CD8-positive, alpha-beta T cell (primary cell): ENCODE measurements at regions of chr6 and their contacts with region 1.

Region 1: GRCh38 chr6:37566111-37566949 is 66.6 kb upstream of the CCDC167 start:
- DNase-seq: peak; percentile 41 to 89 (median 72)
- ATAC-seq: peak; percentile 95
- H3K4me3 ChIP-seq: peak overlapping the region; percentile 2 to 43
- H3K4me3 Mint-ChIP-seq: peak overlapping the region; percentile 39
- H3K27ac ChIP-seq: no peak overlapping the region
- H3K27ac Mint-ChIP-seq: no peak overlapping the region
- H3K4me1 ChIP-seq: peaks cover 3% of the 10 kb centered on the region
- H3K4me1 Mint-ChIP-seq: peaks cover 13% of the 10 kb centered on the region
- H3K27me3 ChIP-seq: peaks cover 0 to 5% of the 10 kb centered on the region in 2 experiments
- H3K27me3 Mint-ChIP-seq: no peaks in the 10 kb centered on the region
- CTCF ChIP-seq: peak; percentile 94

Region 2: DNA sequence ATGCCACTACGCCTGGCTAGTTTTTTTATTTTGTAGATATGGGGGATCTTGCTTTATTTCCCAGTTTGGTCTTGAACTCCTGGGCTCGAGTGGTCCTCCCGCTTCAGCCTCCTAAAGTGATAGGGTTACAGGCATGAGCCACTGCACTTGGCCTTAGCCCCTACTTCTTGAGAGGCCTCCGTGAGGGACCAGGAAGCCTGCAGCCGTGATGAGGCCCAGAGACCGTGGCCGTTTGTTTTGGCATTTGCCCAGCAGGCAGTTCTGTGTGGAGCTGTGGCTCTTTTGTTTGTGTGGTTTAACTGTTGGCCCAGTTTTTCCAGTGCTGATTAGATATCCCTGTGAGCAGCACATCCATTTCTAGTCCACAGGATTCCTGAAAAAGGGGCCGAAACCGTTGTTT is 932.4 kb before region 1 on chr6:
- CTCF ChIA-PET with region 1: no interaction called
- POLR2A ChIA-PET with region 1: no interaction called
- intact Hi-C with region 1: loop called in 1 of 2 experiments (anchors 5 kb)
- DNase-seq: no peak
- ATAC-seq: no peak
- H3K4me3 ChIP-seq: no peak overlapping the region
- H3K4me3 Mint-ChIP-seq: no peak overlapping the region
- H3K27ac ChIP-seq: no peak overlapping the region
- H3K27ac Mint-ChIP-seq: no peak overlapping the region
- H3K4me1 ChIP-seq: no peaks in the 10 kb centered on the region
- H3K4me1 Mint-ChIP-seq: no peaks in the 10 kb centered on the region
- H3K27me3 ChIP-seq: no peaks in the 10 kb centered on the region
- H3K27me3 Mint-ChIP-seq: no peaks in the 10 kb centered on the region
- CTCF ChIP-seq: no peak

Region 3: GRCh38 chr6:37381579-37381978 is 184.8 kb before region 1 on chr6:
- CTCF ChIA-PET with region 1: interaction called, 7 read pairs
- POLR2A ChIA-PET with region 1: no interaction called
- intact Hi-C with region 1: loop called (anchors 1 to 5 kb)
- DNase-seq: peak in 4 of 9 experiments; percentile 10 to 71 (median 42)
- ATAC-seq: peak; percentile 34
- H3K4me3 ChIP-seq: no peak overlapping the region
- H3K4me3 Mint-ChIP-seq: no peak overlapping the region
- H3K27ac ChIP-seq: no peak overlapping the region
- H3K27ac Mint-ChIP-seq: no peak overlapping the region
- H3K4me1 ChIP-seq: no peaks in the 10 kb centered on the region
- H3K4me1 Mint-ChIP-seq: no peaks in the 10 kb centered on the region
- H3K27me3 ChIP-seq: no peaks in the 10 kb centered on the region
- H3K27me3 Mint-ChIP-seq: no peaks in the 10 kb centered on the region
- CTCF ChIP-seq: peak; percentile 40

Region 4: GRCh38 chr6:37489660-37490361 is 76.5 kb before region 1 on chr6:
- CTCF ChIA-PET with region 1: interaction called, 191 read pairs
- POLR2A ChIA-PET with region 1: no interaction called
- intact Hi-C with region 1: no loop called
- DNase-seq: peak in 7 of 9 experiments; percentile 41 to 75 (median 58)
- ATAC-seq: peak; percentile 78
- H3K4me3 ChIP-seq: no peak overlapping the region
- H3K4me3 Mint-ChIP-seq: peak overlapping the region; percentile 32
- H3K27ac ChIP-seq: peak overlapping the region in 1 of 2 experiments; percentile 72
- H3K27ac Mint-ChIP-seq: peak overlapping the region; percentile 91
- H3K4me1 ChIP-seq: peaks cover 37% of the 10 kb centered on the region
- H3K4me1 Mint-ChIP-seq: peaks cover 44% of the 10 kb centered on the region
- H3K27me3 ChIP-seq: no peaks in the 10 kb centered on the region
- H3K27me3 Mint-ChIP-seq: no peaks in the 10 kb centered on the region
- CTCF ChIP-seq: peak; percentile 55

Region 5: GRCh38 chr6:37516076-37516919 is 50.0 kb before region 1 on chr6:
- CTCF ChIA-PET with region 1: interaction called, 24 read pairs
- POLR2A ChIA-PET with region 1: interaction called, 4 read pairs
- intact Hi-C with region 1: loop called in 1 of 2 experiments (anchors 1 kb)
- DNase-seq: peak; percentile 76 to 99 (median 90)
- ATAC-seq: peak; percentile 80
- H3K4me3 ChIP-seq: peak overlapping the region; percentile 35 to 52
- H3K4me3 Mint-ChIP-seq: peak overlapping the region; percentile 88
- H3K27ac ChIP-seq: peak overlapping the region; percentile 80 to 94
- H3K27ac Mint-ChIP-seq: peak overlapping the region; percentile 99
- H3K4me1 ChIP-seq: peaks cover 85% of the 10 kb centered on the region
- H3K4me1 Mint-ChIP-seq: peaks cover 80% of the 10 kb centered on the region
- H3K27me3 ChIP-seq: no peaks in the 10 kb centered on the region
- H3K27me3 Mint-ChIP-seq: no peaks in the 10 kb centered on the region
- CTCF ChIP-seq: no peak

Region 6: GRCh38 chr6:37547564-37548061 is 18.7 kb before region 1 on chr6:
- CTCF ChIA-PET with region 1: interaction called, 25 read pairs
- POLR2A ChIA-PET with region 1: interaction called, 5 read pairs
- intact Hi-C with region 1: no loop called
- DNase-seq: peak in 4 of 9 experiments; percentile 17 to 68 (median 55)
- ATAC-seq: peak; percentile 46
- H3K4me3 ChIP-seq: no peak overlapping the region
- H3K4me3 Mint-ChIP-seq: peak overlapping the region; percentile 51
- H3K27ac ChIP-seq: peak overlapping the region in 1 of 2 experiments; percentile 72
- H3K27ac Mint-ChIP-seq: peak overlapping the region; percentile 80
- H3K4me1 ChIP-seq: peaks cover 17% of the 10 kb centered on the region
- H3K4me1 Mint-ChIP-seq: peaks cover 45% of the 10 kb centered on the region
- H3K27me3 ChIP-seq: no peaks in the 10 kb centered on the region
- H3K27me3 Mint-ChIP-seq: no peaks in the 10 kb centered on the region
- CTCF ChIP-seq: no peak

Region 7: GRCh38 chr6:37576336-37576813 is 10.0 kb after region 1 on chr6:
- CTCF ChIA-PET with region 1: interaction called, 12 read pairs
- POLR2A ChIA-PET with region 1: no interaction called
- intact Hi-C with region 1: no loop called
- DNase-seq: no peak
- ATAC-seq: no peak
- H3K4me3 ChIP-seq: no peak overlapping the region
- H3K4me3 Mint-ChIP-seq: no peak overlapping the region
- H3K27ac ChIP-seq: no peak overlapping the region
- H3K27ac Mint-ChIP-seq: no peak overlapping the region
- H3K4me1 ChIP-seq: no peaks in the 10 kb centered on the region
- H3K4me1 Mint-ChIP-seq: no peaks in the 10 kb centered on the region
- H3K27me3 ChIP-seq: no peaks in the 10 kb centered on the region
- H3K27me3 Mint-ChIP-seq: peaks cover 13% of the 10 kb centered on the region
- CTCF ChIP-seq: no peak

Region 8: GRCh38 chr6:37587866-37588734 is 21.8 kb after region 1 on chr6:
- CTCF ChIA-PET with region 1: no interaction called
- POLR2A ChIA-PET with region 1: no interaction called
- intact Hi-C with region 1: no loop called
- DNase-seq: no peak
- ATAC-seq: no peak
- H3K4me3 ChIP-seq: no peak overlapping the region
- H3K4me3 Mint-ChIP-seq: no peak overlapping the region
- H3K27ac ChIP-seq: no peak overlapping the region
- H3K27ac Mint-ChIP-seq: no peak overlapping the region
- H3K4me1 ChIP-seq: no peaks in the 10 kb centered on the region
- H3K4me1 Mint-ChIP-seq: no peaks in the 10 kb centered on the region
- H3K27me3 ChIP-seq: no peaks in the 10 kb centered on the region
- H3K27me3 Mint-ChIP-seq: no peaks in the 10 kb centered on the region
- CTCF ChIP-seq: no peak

Region 9: GRCh38 chr6:37850728-37851285 is 284.5 kb after region 1 on chr6:
- CTCF ChIA-PET with region 1: no interaction called
- POLR2A ChIA-PET with region 1: no interaction called
- intact Hi-C with region 1: no loop called
- DNase-seq: peak in 2 of 9 experiments; percentile 24 to 25
- ATAC-seq: peak; percentile 36
- H3K4me3 ChIP-seq: no peak overlapping the region
- H3K4me3 Mint-ChIP-seq: no peak overlapping the region
- H3K27ac ChIP-seq: no peak overlapping the region
- H3K27ac Mint-ChIP-seq: no peak overlapping the region
- H3K4me1 ChIP-seq: peaks cover 38% of the 10 kb centered on the region
- H3K4me1 Mint-ChIP-seq: peaks cover 62% of the 10 kb centered on the region
- H3K27me3 ChIP-seq: no peaks in the 10 kb centered on the region
- H3K27me3 Mint-ChIP-seq: no peaks in the 10 kb centered on the region
- CTCF ChIP-seq: no peak

Region 10: GRCh38 chr6:38973178-38974054 is 1407.1 kb after region 1 on chr6:
- CTCF ChIA-PET with region 1: no interaction called
- POLR2A ChIA-PET with region 1: no interaction called
- intact Hi-C with region 1: no loop called
- DNase-seq: peak in 2 of 9 experiments; percentile 46 to 58
- ATAC-seq: peak; percentile 70
- H3K4me3 ChIP-seq: no peak overlapping the region
- H3K4me3 Mint-ChIP-seq: no peak overlapping the region
- H3K27ac ChIP-seq: no peak overlapping the region
- H3K27ac Mint-ChIP-seq: no peak overlapping the region
- H3K4me1 ChIP-seq: no peaks in the 10 kb centered on the region
- H3K4me1 Mint-ChIP-seq: no peaks in the 10 kb centered on the region
- H3K27me3 ChIP-seq: peaks cover 0 to 2% of the 10 kb centered on the region in 2 experiments
- H3K27me3 Mint-ChIP-seq: peaks cover 10% of the 10 kb centered on the region
- CTCF ChIP-seq: peak; percentile 38